ENCODE measurements at regions of chr5 and their contacts with region 1.

Region 1: DNA sequence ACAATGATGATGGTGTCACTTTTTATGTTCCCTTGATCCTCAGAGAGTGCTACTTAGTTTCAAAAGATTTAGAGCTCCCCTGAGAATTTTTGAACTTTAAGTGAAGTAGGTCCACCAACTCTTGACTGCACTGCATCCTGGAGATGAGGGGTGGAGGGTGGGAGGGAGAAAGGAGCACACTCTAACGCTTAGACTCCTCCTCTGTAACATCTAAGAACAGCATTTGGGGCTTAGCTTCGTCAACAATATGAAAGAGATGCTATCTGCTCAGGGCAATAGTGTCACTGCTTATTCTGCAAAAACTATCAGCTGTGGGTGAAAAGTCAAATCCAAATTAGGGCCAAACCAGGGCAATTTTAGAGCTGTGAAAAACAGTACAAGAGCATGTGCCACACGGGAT is 242.8 kb upstream of the EFNA5 start:
- DNase-seq: no peak
- H3K4me3 ChIP-seq: no peak overlapping the region
- H3K27ac ChIP-seq: no peak overlapping the region
- H3K4me1 ChIP-seq: no peaks in the 10 kb centered on the region
- H3K27me3 ChIP-seq: no peaks in the 10 kb centered on the region
- CTCF ChIP-seq: no peak

Region 2: GRCh38 chr5:107969847-107970246 is 56.4 kb after region 1 on chr5:
- CTCF ChIA-PET with region 1: no interaction called
- POLR2A ChIA-PET with region 1: no interaction called
- intact Hi-C with region 1: loop called (anchors 5 kb)
- DNase-seq: no peak
- H3K4me3 ChIP-seq: no peak overlapping the region
- H3K27ac ChIP-seq: no peak overlapping the region
- H3K4me1 ChIP-seq: no peaks in the 10 kb centered on the region
- H3K27me3 ChIP-seq: no peaks in the 10 kb centered on the region
- CTCF ChIP-seq: no peak

Measured in A673 (cell line).